RWPE1 (cell line): ENCODE measurements at regions of chr3 and their contacts with region 1.

Region 1: GRCh38 chr3:183185696-183186095 is 23.2 kb upstream of the LAMP3 start:
- DNase-seq: peak; percentile 51
- H3K27ac ChIP-seq: peak overlapping the region; percentile 78
- CTCF ChIP-seq: no peak

Region 2: GRCh38 chr3:183252973-183253901 is 67.5 kb after region 1 on chr3 and contains the start of gene B3GNT5:
- CTCF ChIA-PET with region 1: interaction called, 17 read pairs
- POLR2A ChIA-PET with region 1: no interaction called
- DNase-seq: peak; percentile 70
- H3K27ac ChIP-seq: peak within 1 kb of the TSS; percentile 96
- CTCF ChIP-seq: no peak

Region 3: GRCh38 chr3:183377307-183377959 is 191.7 kb after region 1 on chr3:
- CTCF ChIA-PET with region 1: interaction called, 107 read pairs
- POLR2A ChIA-PET with region 1: interaction called, 4 read pairs
- DNase-seq: peak; percentile 65
- H3K27ac ChIP-seq: no peak overlapping the region
- CTCF ChIP-seq: no peak

Region 4: GRCh38 chr3:183385698-183386613 is 200.3 kb after region 1 on chr3:
- CTCF ChIA-PET with region 1: interaction called, 107 read pairs
- POLR2A ChIA-PET with region 1: interaction called, 4 read pairs
- DNase-seq: peak; percentile 72
- H3K27ac ChIP-seq: no peak overlapping the region
- CTCF ChIP-seq: peak; percentile 65